Right cardiac atrium (tissue), 5 donors: ENCODE measurements at regions of chr10 and their contacts with region 1.

Region 1: DNA sequence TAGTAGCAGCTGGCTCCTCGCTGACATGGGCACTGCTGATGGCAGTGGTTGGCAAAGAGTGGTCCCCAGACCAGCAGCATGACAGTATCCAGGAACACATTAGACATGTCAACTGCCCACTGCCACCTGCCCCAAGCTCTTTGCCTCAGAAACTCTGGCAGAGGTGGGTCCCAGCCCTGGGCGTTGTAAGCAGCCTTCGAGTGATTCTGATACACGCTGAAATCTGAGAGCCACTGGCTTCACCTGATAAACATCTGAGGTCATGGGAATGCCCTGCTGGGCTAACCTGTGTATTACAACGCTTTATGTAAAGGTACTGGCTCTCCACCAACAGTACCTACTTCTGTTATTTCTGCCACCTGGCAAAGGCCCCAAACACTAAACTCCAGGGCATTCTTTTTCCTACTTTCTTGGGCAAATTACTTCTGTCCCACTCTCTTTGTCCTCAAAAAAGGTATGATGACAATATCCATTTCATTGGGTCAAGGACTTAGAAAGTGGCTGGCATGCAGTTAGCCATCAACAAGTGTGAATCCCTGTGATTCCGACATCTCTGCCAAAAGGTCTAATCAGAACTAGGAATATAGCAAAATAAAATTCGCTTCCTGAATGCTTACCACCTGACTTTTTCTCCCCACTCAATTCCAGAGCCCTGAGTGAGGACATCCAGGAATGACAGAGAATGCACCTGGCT is 9.2 kb downstream of the SGMS1 start:
- DNase-seq: no peak
- ATAC-seq: no peak
- H3K4me3 ChIP-seq: no peak overlapping the region
- H3K27ac ChIP-seq: peak overlapping the region; percentile 30
- H3K4me1 ChIP-seq: peaks cover 17% of the 10 kb centered on the region
- H3K27me3 ChIP-seq: no peaks in the 10 kb centered on the region

Region 2: GRCh38 chr10:50464004-50464409 is 150.6 kb before region 1 on chr10:
- intact Hi-C with region 1: no loop called
- DNase-seq: peak in 1 of 3 donors; percentile 32
- ATAC-seq: no peak
- H3K4me3 ChIP-seq: no peak overlapping the region
- H3K27ac ChIP-seq: no peak overlapping the region
- H3K4me1 ChIP-seq: no peaks in the 10 kb centered on the region
- H3K27me3 ChIP-seq: no peaks in the 10 kb centered on the region

Region 3: DNA sequence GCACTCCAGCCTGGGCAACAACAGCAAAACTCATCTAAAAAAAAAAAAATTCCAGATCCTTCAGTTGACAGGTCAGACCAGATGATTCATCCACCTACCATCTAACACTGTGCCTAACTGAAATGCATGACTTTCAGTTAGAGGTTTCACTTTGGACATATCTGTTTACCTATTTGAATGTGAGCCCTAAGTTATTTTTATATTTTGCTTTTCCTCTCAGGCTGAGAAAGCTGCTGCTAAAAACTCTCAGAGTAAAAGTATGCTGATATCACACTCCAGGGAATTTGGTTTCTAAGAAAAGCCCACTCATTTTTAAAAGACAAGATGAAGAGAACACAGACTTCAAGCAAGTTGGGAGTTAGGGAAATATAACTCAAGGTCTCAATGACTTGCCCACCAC is 116.8 kb before region 1 on chr10:
- intact Hi-C with region 1: no loop called
- DNase-seq: no peak
- ATAC-seq: peak; percentile 63 to 67
- H3K4me3 ChIP-seq: no peak overlapping the region
- H3K27ac ChIP-seq: no peak overlapping the region
- H3K4me1 ChIP-seq: peaks cover 4% of the 10 kb centered on the region
- H3K27me3 ChIP-seq: no peaks in the 10 kb centered on the region

Region 4: GRCh38 chr10:50552771-50553535 is 61.6 kb before region 1 on chr10:
- intact Hi-C with region 1: loop called in 1 of 4 experiments (anchors 10 kb)
- DNase-seq: no peak
- ATAC-seq: no peak
- H3K4me3 ChIP-seq: no peak overlapping the region
- H3K27ac ChIP-seq: peak overlapping the region; percentile 70
- H3K4me1 ChIP-seq: peaks cover 17% of the 10 kb centered on the region
- H3K27me3 ChIP-seq: no peaks in the 10 kb centered on the region